ENCODE measurements at regions of chr13 and their contacts with region 1.

Region 1: DNA sequence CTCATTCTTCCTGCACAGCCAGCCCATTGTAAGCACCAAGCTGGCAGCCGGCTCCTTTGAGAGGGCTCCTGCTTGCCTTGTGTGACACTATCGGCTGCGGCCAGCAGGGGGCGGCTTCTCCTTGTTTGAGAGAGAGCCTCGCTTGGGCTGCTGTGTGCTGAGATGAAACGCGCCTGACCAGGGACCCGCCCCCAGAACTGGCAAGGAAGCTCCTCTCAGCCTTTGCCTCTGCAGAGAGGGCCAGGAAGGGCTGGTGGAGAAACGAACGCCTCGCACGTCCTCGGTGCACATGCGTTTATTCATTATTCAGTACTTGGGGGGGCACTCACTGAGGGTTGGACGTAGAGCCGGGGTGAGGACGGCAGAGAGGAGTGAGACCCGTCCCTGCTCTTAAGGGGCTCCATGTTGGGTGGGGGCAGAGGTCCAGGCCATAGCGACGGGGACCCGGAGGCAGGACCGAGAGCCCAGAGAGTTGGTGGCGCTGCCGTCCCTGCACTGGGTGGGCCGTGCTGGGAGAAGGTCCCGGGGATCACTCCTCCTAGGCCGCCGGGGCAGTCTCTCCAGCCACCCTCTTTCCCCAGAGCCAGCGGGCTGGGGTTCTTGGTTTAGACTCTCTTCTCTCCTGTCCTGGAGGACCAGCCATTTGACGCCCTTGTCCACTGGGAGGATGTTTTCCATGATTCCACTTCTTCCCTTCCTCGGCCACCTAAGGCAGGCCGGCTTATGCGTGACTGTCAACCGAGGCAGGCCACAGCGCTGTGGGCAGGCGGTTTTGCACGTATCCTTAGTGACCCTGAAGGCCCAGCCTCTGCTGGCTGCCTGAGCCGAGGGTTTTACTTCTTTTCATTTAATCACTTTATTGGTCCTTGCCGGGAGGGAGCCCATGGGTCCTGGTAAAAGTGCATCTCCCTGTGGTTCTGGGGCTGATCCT is 174.5 kb downstream of the KATNAL1 start:
- DNase-seq: peak; percentile 97 to 100
- H3K4me3 ChIP-seq: no peak overlapping the region
- CTCF ChIP-seq: peak in 1 of 3 donors; percentile 88
- POLR2A ChIP-seq: no peak

Region 2: DNA sequence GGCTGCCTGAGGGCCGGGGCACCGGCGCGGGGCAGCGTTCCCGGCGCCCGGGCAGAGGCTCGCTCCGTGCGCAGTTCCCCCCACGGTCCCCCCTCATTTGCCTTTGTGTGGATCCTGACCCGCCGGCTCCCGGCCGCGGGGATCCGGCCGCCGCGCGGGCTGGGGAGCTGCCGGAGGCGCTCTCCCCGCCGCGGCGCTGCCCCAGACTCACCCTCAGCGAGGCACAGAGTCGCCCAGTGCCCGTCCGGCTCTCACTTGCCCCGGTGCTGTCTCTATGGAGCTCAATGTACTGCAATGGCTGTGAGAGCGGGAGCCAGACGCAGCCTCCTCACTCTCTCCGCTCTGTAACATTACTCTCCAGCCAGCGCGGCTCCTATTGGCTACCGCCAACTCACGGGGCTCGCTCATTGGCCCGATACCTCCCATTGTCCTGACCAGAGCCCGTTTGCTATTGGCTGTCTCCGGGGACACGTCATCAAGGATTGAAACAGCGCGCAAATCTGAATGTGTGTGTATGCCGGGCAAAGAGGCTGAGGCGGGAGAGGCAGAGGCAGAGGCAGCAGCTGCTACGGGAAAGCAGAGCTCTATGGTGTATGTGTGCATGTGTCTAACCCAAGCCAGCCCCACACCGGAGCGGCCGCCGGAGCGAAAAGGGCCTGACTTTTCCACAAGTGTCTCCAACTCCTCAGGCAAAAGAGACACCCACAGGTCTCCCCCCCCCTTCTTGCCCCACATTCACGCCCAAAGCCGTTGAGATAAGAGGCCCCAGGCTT is 332.9 kb after region 1 on chr13 and contains the start of gene HMGB1:
- intact Hi-C with region 1: loop called (anchors 10 kb)
- DNase-seq: peak; percentile 99 to 100
- H3K4me3 ChIP-seq: peak within 1 kb of the TSS; percentile 73
- CTCF ChIP-seq: no peak
- POLR2A ChIP-seq: peak in 1 of 2 donors; percentile 75
- total RNA-seq, gene HMGB1: 158 to 262 (median 208) TPM

Region 3: GRCh38 chr13:30647824-30648521 is 515.1 kb after region 1 on chr13:
- intact Hi-C with region 1: no loop called
- DNase-seq: no peak
- H3K4me3 ChIP-seq: no peak overlapping the region
- CTCF ChIP-seq: no peak
- POLR2A ChIP-seq: no peak

Region 4: GRCh38 chr13:31044377-31045285 is 911.7 kb after region 1 on chr13:
- intact Hi-C with region 1: loop called (anchors 10 kb)
- DNase-seq: peak; percentile 76 to 97
- H3K4me3 ChIP-seq: no peak overlapping the region
- CTCF ChIP-seq: peak in 1 of 3 donors; percentile 60
- POLR2A ChIP-seq: no peak

Measured in lower leg skin (tissue), 4 donors.